ENCODE measurements at regions of chr9 and their contacts with region 1.

Region 1: DNA sequence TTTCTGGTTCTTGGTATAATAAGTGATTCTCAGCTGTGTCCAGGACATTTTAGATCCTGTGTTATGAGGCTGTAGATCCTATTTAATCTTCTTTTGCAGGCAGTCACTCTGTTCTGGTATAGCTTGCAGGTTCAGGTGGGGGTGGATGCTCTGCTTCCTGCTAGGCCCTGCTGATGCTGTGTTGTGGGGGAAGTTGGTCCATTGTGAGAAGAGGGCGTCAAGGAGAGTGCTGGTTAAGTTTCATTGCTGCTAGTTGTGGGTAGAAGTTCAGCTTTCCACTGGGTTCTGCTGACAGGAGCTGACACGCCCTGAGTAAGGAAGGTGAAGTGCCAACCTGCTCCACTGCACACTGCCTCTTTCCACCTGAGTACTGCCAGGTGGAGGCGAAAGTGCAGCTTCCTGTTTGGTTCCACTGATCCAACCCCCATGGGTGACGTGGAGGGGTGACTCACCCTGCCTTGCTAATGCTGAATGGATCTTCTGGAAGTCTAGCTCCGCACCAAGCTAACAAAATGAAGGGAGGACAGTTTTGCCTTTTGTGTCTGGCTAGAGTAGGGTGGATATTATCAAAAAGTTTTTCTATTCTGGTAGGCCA is 16.3 kb downstream of the NMRK1 start:
- DNase-seq: peak; percentile 86
- ATAC-seq: peak; percentile 96
- H3K4me3 Mint-ChIP-seq: peak overlapping the region; percentile 11
- H3K27ac Mint-ChIP-seq: peak overlapping the region; percentile 75
- H3K4me1 Mint-ChIP-seq: peaks cover 37% of the 10 kb centered on the region
- H3K27me3 Mint-ChIP-seq: no peaks in the 10 kb centered on the region

Region 2: DNA sequence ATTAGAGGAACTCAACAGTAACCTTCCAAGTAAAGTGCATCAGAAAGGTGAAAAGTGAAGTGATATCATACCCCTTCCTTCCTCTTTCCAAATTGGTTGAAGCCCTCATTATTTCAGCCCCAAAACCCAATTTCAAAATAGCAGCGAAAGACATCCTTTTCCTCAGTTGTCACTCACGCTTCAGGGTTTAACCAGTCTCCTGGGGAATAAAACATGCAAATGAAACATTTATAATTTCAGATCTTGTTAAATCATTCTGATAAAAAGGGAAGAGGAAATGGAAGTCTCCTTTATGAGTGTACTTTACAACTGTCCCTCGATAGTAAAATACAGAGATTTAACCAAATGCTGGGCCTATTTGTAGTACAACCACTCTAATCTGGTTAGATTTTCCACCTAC is 206.4 kb before region 1 on chr9:
- CTCF ChIA-PET with region 1: no interaction called
- POLR2A ChIA-PET with region 1: no interaction called
- intact Hi-C with region 1: loop called in 1 of 2 experiments (anchors 10 kb)
- DNase-seq: no peak
- ATAC-seq: no peak
- H3K4me3 Mint-ChIP-seq: no peak overlapping the region
- H3K27ac Mint-ChIP-seq: no peak overlapping the region
- H3K4me1 Mint-ChIP-seq: peaks cover 7% of the 10 kb centered on the region
- H3K27me3 Mint-ChIP-seq: peaks cover 2% of the 10 kb centered on the region

Region 3: GRCh38 chr9:74887041-74887980 is 184.3 kb before region 1 on chr9 and contains the start of gene TRPM6:
- CTCF ChIA-PET with region 1: no interaction called
- POLR2A ChIA-PET with region 1: no interaction called
- intact Hi-C with region 1: no loop called
- DNase-seq: peak; percentile 56
- ATAC-seq: peak; percentile 76
- H3K4me3 Mint-ChIP-seq: peak within 1 kb of the TSS; percentile 72
- H3K27ac Mint-ChIP-seq: no peak within 1 kb of the TSS
- H3K4me1 Mint-ChIP-seq: peaks cover 10% of the 10 kb centered on the region
- H3K27me3 Mint-ChIP-seq: peaks cover 39% of the 10 kb centered on the region
- total RNA-seq, gene TRPM6: 0.07 TPM

Region 4: GRCh38 chr9:74952281-74953151 is 119.1 kb before region 1 on chr9 and contains the start of gene C9orf40:
- CTCF ChIA-PET with region 1: interaction called, 7 read pairs
- POLR2A ChIA-PET with region 1: no interaction called
- intact Hi-C with region 1: loop called in 1 of 2 experiments (anchors 2 kb)
- DNase-seq: peak; percentile 95
- ATAC-seq: peak; percentile 93
- H3K4me3 Mint-ChIP-seq: peak within 1 kb of the TSS; percentile 93
- H3K27ac Mint-ChIP-seq: peak within 1 kb of the TSS; percentile 96
- H3K4me1 Mint-ChIP-seq: peaks cover 28% of the 10 kb centered on the region
- H3K27me3 Mint-ChIP-seq: no peaks in the 10 kb centered on the region
- total RNA-seq, gene C9orf40: 14.0 to 19.7 TPM

Region 5: GRCh38 chr9:75001719-75002422 is 69.8 kb before region 1 on chr9:
- CTCF ChIA-PET with region 1: interaction called, 4 read pairs
- POLR2A ChIA-PET with region 1: no interaction called
- intact Hi-C with region 1: loop called (anchors 5 kb)
- DNase-seq: no peak
- ATAC-seq: peak; percentile 92
- H3K4me3 Mint-ChIP-seq: no peak overlapping the region
- H3K27ac Mint-ChIP-seq: no peak overlapping the region
- H3K4me1 Mint-ChIP-seq: peaks cover 2% of the 10 kb centered on the region
- H3K27me3 Mint-ChIP-seq: no peaks in the 10 kb centered on the region

Region 6: GRCh38 chr9:76403352-76403751 is 1331.7 kb after region 1 on chr9:
- CTCF ChIA-PET with region 1: no interaction called
- POLR2A ChIA-PET with region 1: no interaction called
- intact Hi-C with region 1: no loop called
- DNase-seq: peak; percentile 30
- ATAC-seq: peak; percentile 94
- H3K4me3 Mint-ChIP-seq: peak overlapping the region; percentile 16
- H3K27ac Mint-ChIP-seq: peak overlapping the region; percentile 62
- H3K4me1 Mint-ChIP-seq: peaks cover 11% of the 10 kb centered on the region
- H3K27me3 Mint-ChIP-seq: no peaks in the 10 kb centered on the region

Measured in activated CD4-positive, alpha-beta T cell treated with anti-CD3 and anti-CD28 coated beads for 36 hours (primary cell).